ENCODE measurements at regions of chr7 and their contacts with region 1.

Region 1: GRCh38 chr7:130941322-130942210 is 207.6 kb upstream of the KLF14 start:
- DNase-seq: no peak
- ATAC-seq: no peak
- H3K4me3 Mint-ChIP-seq: peak overlapping the region; percentile 73
- H3K27ac Mint-ChIP-seq: peak overlapping the region; percentile 86
- H3K4me1 Mint-ChIP-seq: peaks cover 87% of the 10 kb centered on the region
- H3K27me3 Mint-ChIP-seq: no peaks in the 10 kb centered on the region
- CTCF ChIP-seq: no peak

Region 2: GRCh38 chr7:130912862-130913631 is 28.5 kb before region 1 on chr7:
- CTCF ChIA-PET with region 1: interaction called, 5 read pairs
- POLR2A ChIA-PET with region 1: interaction called, 31 read pairs
- intact Hi-C with region 1: no loop called
- DNase-seq: peak; percentile 93
- ATAC-seq: peak; percentile 79
- H3K4me3 Mint-ChIP-seq: peak overlapping the region; percentile 87
- H3K27ac Mint-ChIP-seq: peak overlapping the region; percentile 97
- H3K4me1 Mint-ChIP-seq: peaks cover 85% of the 10 kb centered on the region
- H3K27me3 Mint-ChIP-seq: no peaks in the 10 kb centered on the region
- CTCF ChIP-seq: no peak

Region 3: DNA sequence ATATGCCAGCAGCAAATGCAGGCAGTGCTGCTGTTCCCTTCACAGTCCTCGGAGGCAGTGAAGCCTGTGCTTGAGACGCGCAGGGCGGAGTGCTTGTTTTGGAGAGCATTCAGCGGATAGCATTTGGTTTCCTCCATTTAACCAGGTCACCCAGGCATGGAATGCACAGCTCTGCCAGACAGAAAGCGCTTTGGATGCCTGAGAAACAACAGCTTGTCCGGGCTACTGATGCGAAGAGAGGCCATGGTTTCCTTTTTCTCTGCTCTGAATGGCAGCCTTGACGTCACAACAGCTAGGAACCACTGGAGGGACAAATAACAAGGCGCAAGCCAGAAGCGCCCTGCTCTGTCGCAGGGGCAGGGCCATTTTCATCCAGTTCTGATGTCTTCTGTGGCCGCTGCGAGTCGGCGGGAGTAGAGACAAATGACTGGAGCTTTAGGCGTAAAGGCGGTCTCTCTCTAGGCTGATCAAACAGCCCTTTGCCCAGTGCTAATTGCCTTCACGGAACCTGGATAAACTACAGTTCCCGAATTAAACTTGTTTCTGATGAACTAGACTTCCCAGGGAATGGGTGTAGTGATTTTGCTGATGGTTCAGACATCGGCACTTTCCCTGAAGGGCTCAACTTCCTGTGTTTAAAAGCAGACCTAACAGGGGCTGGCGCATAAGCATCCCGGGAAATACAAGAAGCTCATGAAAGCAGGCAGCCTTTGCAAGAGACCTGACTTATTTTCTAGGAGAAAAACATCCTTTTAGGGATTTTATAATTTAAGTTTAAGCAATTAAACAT is 20.0 kb before region 1 on chr7:
- CTCF ChIA-PET with region 1: no interaction called
- POLR2A ChIA-PET with region 1: interaction called, 115 read pairs
- intact Hi-C with region 1: no loop called
- DNase-seq: peak; percentile 22
- ATAC-seq: no peak
- H3K4me3 Mint-ChIP-seq: no peak overlapping the region
- H3K27ac Mint-ChIP-seq: peak overlapping the region; percentile 66
- H3K4me1 Mint-ChIP-seq: peaks cover 89% of the 10 kb centered on the region
- H3K27me3 Mint-ChIP-seq: no peaks in the 10 kb centered on the region
- CTCF ChIP-seq: no peak

Region 4: DNA sequence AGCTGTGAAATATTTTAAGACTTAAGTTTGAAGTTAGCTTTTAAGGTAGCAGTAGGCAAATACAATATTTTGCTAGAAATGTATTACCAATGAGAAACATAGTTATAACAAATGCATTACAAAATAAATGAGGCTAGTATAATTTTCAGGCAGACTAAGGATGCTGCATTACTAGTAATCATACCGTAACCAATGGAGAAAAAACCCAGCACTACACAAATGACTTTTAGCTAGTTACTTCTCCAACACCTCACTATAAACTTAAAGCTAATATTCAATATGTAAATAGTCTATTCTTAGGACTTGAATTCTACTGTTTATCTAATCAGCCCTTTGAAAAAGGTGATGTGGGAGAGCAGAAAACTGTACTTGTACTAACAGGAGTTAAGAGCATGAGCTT is 77.8 kb after region 1 on chr7:
- CTCF ChIA-PET with region 1: no interaction called
- POLR2A ChIA-PET with region 1: no interaction called
- intact Hi-C with region 1: no loop called
- DNase-seq: no peak
- ATAC-seq: no peak
- H3K4me3 Mint-ChIP-seq: no peak overlapping the region
- H3K27ac Mint-ChIP-seq: peak overlapping the region; percentile 64
- H3K4me1 Mint-ChIP-seq: peaks cover 79% of the 10 kb centered on the region
- H3K27me3 Mint-ChIP-seq: no peaks in the 10 kb centered on the region
- CTCF ChIP-seq: no peak

Region 5: GRCh38 chr7:131619336-131620305 is 678.1 kb after region 1 on chr7:
- CTCF ChIA-PET with region 1: no interaction called
- POLR2A ChIA-PET with region 1: no interaction called
- intact Hi-C with region 1: no loop called
- DNase-seq: no peak
- ATAC-seq: no peak
- H3K4me3 Mint-ChIP-seq: no peak overlapping the region
- H3K27ac Mint-ChIP-seq: no peak overlapping the region
- H3K4me1 Mint-ChIP-seq: no peaks in the 10 kb centered on the region
- H3K27me3 Mint-ChIP-seq: peaks cover 7% of the 10 kb centered on the region
- CTCF ChIP-seq: no peak